GM18951 (cell line): ENCODE measurements at regions of chr6 and their contacts with region 1.

Region 1: DNA sequence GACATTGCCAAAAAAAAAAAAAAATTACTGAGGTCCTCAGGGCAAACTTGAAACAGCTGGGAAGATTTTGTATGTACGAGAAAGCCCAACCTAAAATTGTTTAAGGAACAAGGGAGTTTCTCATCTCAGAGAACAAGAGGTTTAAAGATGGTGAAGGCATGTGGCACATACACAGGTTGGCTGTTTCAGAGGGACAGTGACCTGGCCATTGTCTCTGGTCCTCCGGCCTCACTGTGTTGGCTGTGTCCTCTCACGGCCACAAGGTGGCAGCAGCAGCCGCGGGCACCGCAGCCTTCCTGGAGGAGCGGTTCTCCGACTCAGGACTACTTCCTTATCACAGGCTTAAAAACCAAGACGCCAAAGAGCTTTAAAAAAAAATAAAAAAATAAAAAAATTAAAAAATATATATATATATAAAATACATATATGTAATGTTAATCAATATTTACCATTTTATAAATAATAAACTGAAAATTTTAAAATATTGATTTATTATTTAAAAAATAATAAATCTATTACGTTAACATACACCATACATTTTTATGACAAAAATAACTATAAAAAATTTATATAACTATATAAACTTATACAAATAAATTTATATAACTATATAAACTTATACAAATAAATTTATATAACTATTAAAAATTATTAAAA is 52.8 kb downstream of the GTF2H5 start:
- POLR2A ChIP-seq: no peak

Region 2: DNA sequence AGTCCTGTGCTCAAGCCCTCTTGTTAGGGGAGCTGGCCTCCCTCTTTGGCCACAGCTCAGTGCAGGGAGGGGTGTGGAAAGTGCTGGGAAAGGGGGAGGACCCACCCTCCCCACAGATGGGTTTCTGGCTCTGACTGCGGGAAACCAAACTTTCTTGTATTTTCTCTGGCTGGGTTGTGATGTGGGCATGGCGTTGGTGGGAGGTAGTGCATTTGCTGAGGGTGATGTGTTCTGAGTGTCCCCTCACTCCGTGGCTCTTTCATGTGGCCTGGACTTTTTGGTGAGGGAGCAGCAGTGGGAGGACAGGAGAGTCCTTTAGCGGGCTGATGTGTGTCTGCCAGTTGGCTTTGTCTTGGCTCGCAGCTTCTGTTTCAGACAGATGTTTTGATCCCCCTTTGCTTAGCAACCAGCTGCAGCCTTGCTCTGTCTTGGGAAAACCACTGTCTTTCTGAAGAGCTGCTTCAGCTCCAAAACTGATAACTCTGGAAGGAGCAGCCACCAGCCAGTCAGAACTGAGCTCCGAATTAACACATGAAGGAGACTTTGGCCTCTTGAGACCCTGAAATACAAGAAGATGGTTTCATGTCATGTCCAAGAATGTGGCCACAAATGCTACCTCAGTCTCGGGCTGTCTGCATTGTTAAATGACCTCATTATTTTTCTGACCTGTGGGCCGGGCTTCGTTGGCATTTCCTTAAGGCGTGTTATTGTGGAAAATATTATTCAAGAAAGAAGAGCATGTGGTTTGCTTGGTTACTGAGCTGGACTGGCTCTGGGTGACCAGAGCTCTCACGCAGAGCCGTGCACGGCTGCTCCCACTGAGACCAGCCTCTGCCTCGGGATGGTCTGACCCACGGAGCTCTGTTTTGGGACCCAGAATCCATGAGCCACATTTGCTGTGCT is 217.7 kb before region 1 on chr6:
- in situ Hi-C with region 1: no loop called
- POLR2A ChIP-seq: no peak

Region 3: DNA sequence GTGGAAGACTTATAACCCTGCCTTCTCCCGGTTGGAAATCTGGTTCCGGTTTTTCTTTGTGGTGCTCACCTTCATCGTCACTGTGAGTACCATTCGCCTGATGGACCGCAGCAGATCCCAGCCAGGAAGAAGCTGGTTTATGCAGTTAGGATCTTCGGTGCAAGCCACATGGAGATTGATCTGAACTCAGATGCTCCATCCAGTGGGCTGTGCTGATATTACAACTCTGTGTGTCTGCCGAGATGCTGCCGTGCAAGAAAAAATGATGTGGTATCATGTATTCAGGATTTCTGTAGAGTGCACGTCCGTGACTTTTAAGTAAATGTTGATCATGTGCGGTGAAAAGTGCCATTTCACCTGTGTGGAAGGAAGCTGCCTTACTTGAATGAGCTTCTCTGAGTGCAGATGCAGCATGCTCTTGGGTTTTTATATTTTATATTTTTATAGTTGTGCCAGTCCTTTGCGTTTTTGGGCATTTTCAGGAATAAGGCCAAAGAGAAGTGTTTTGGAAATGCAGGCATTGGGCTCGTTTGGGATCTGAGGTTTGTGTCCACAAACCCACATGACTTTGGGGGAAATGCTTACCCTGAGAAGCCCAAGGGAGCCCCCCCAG is 384.5 kb after region 1 on chr6:
- in situ Hi-C with region 1: loop called (anchors 10 kb)
- POLR2A ChIP-seq: no peak